ENCODE measurements at regions of chr19 and their contacts with region 1.

Region 1: GRCh38 chr19:3471954-3472655 is 8.2 kb downstream of the SMIM24 start:
- DNase-seq: no peak
- H3K4me3 ChIP-seq: peak overlapping the region in 1 of 2 donors; percentile 2
- H3K27ac ChIP-seq: no peak overlapping the region
- H3K4me1 ChIP-seq: peaks cover 4 to 26% of the 10 kb centered on the region in 2 donors
- H3K27me3 ChIP-seq: no peaks in the 10 kb centered on the region
- CTCF ChIP-seq: peak; percentile 87 to 94 (median 91)

Region 2: DNA sequence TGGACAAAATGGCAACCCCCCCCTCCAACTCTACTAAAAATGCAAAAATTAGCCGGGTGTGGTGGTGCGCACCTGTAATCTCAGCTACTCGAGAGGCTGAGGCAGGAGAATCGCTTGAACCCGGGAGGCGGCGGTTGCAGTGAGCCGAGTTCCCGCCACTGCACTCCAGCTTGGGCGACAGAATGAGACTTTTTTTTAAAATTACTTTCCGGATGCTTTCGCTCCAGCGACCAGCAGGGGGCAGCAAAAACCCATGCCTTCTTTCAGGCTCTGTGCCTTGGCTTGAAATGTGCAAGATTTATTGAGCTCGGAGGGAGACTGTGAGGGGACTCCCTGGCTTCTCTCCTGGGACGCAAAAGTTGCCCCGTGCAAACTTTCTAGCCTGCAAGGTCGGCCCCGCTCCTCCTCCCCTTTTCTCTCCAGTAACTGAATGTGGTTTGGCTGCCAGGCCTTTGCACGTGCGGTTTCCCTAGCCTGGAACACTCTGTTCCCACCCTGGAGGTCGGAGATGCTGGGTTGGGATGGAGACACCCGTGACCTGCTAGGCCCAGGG is 167.2 kb before region 1 on chr19:
- intact Hi-C with region 1: loop called (anchors 1 kb)
- DNase-seq: peak in 1 of 2 donors; percentile 81
- H3K4me3 ChIP-seq: no peak overlapping the region
- H3K27ac ChIP-seq: no peak overlapping the region
- H3K4me1 ChIP-seq: peaks cover 0 to 3% of the 10 kb centered on the region in 2 donors
- H3K27me3 ChIP-seq: peaks cover 4% of the 10 kb centered on the region
- CTCF ChIP-seq: peak; percentile 81 to 94 (median 84)

Region 3: DNA sequence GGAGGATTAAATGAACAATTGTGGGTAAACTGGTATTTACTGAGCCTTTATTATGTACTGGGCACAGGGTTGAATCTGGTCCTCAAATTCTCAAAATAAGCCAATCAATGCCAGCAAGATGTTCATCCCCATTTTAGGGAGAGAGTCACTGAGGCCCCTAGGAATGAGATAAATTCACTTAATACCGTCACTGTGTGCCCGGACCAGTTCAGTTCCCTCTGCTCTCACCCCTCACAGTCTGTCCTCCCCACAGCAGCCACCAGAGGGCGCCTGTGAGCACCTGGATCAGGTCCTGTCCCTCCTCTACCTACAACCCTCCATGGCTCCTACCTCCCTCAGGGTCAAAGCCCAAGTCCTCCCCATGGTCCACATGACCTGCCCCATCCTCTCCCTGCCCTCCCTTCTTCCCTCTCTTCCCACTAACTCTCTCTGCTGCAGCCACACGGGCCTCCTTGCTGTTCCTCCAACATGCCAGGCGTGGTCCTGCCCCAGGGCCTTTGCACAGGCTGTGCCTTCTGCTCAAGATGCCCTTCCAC is 147.7 kb before region 1 on chr19:
- intact Hi-C with region 1: loop called (anchors 1 kb)
- DNase-seq: no peak
- H3K4me3 ChIP-seq: no peak overlapping the region
- H3K27ac ChIP-seq: no peak overlapping the region
- H3K4me1 ChIP-seq: no peaks in the 10 kb centered on the region
- H3K27me3 ChIP-seq: no peaks in the 10 kb centered on the region
- CTCF ChIP-seq: peak; percentile 40 to 68 (median 64)

Region 4: GRCh38 chr19:3336680-3337523 is 135.2 kb before region 1 on chr19:
- intact Hi-C with region 1: loop called (anchors 2 kb)
- DNase-seq: peak; percentile 76 to 97
- H3K4me3 ChIP-seq: no peak overlapping the region
- H3K27ac ChIP-seq: peak overlapping the region; percentile 93 to 98
- H3K4me1 ChIP-seq: peaks cover 22 to 50% of the 10 kb centered on the region in 2 donors
- H3K27me3 ChIP-seq: no peaks in the 10 kb centered on the region
- CTCF ChIP-seq: peak in 1 of 3 experiments; percentile 0

Region 5: GRCh38 chr19:3516675-3517207 is 44.6 kb after region 1 on chr19:
- intact Hi-C with region 1: no loop called
- DNase-seq: no peak
- H3K4me3 ChIP-seq: no peak overlapping the region
- H3K27ac ChIP-seq: no peak overlapping the region
- H3K4me1 ChIP-seq: no peaks in the 10 kb centered on the region
- H3K27me3 ChIP-seq: no peaks in the 10 kb centered on the region
- CTCF ChIP-seq: no peak